OCI-LY7 (cell line): ENCODE measurements at regions of chr17 and their contacts with region 1.

Region 1: GRCh38 chr17:73255671-73256181 is 6.0 kb downstream of the CPSF4L start:
- DNase-seq: peak; percentile 66
- H3K4me3 ChIP-seq: no peak overlapping the region
- H3K27ac ChIP-seq: no peak overlapping the region
- H3K4me1 ChIP-seq: no peaks in the 10 kb centered on the region
- CTCF ChIP-seq: peak; percentile 100

Region 2: DNA sequence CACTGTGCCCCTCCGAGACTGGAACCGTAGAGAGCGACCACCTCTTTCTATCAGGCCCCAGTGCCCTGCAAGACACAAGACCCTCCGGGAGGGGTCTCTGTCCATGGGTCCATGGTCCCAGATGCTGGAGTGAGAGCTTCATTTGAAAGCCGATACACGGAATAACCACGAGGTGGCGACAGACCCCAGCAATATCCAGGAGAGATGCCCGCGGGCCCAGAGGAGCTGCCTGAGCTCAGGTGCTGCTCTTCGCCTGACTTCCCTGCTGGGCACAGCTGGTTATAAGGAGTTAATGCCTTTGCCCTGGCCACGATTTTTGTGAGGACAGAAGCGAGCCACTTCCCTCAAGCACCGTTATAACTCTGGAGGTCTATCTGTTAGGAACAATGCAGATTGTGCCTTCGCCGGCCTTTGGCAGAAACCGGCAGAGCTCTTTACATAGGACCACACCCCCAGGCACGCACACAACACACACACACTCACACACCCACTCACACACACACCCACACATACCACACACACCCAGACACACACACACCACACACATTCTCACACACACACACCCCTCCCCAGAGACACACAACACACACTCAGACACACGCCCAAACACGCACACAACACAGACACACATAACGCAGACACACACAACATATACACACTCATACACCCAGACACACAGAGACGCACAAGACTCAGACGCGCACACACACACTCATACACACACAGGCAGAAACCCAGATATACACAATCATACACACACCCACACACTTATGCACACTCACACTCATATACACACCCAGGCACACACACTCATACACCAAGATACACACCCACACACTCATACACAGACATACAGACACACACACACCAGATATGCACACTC is 698.5 kb before region 1 on chr17:
- CTCF ChIA-PET with region 1: no interaction called
- POLR2A ChIA-PET with region 1: no interaction called
- intact Hi-C with region 1: loop called (anchors 10 kb)
- DNase-seq: peak; percentile 74
- H3K4me3 ChIP-seq: no peak overlapping the region
- H3K27ac ChIP-seq: no peak overlapping the region
- H3K4me1 ChIP-seq: no peaks in the 10 kb centered on the region
- CTCF ChIP-seq: peak; percentile 97

Region 3: GRCh38 chr17:73340093-73340596 is 84.4 kb after region 1 on chr17:
- CTCF ChIA-PET with region 1: no interaction called
- POLR2A ChIA-PET with region 1: no interaction called
- intact Hi-C with region 1: no loop called
- DNase-seq: no peak
- H3K4me3 ChIP-seq: no peak overlapping the region
- H3K27ac ChIP-seq: no peak overlapping the region
- H3K4me1 ChIP-seq: no peaks in the 10 kb centered on the region
- CTCF ChIP-seq: no peak

Region 4: DNA sequence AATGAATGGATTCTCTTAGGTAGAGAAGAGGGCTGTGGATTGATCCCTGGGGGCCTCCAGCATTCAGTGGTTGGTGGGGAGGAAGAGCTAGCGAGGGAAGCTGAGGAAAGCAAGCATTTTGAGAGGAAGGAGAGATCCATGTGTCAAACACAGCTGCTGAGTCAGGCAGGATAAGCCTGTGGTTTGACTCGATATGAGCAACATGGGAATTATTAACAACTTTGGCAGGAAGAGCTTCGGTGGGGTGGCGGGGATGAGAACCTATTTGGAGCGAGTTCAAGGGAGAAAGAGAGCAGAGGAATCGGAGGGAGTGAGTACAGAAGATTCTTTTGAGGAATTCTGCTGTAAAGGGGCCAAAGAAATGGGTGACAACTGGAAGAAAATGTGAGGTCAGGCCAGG is 115.6 kb after region 1 on chr17:
- CTCF ChIA-PET with region 1: interaction called, 3 read pairs
- POLR2A ChIA-PET with region 1: no interaction called
- intact Hi-C with region 1: loop called (anchors 1 kb)
- DNase-seq: no peak
- H3K4me3 ChIP-seq: no peak overlapping the region
- H3K27ac ChIP-seq: no peak overlapping the region
- H3K4me1 ChIP-seq: no peaks in the 10 kb centered on the region
- CTCF ChIP-seq: no peak